Naive thymus-derived CD4-positive, alpha-beta T cell (primary cell): ENCODE measurements at regions of chr17 and their contacts with region 1.

Region 1: GRCh38 chr17:7014261-7014994 is 2.0 kb downstream of the RNASEK start:
- DNase-seq: peak; percentile 96 to 98 (median 97)
- ATAC-seq: peak; percentile 89
- H3K4me3 ChIP-seq: peak overlapping the region; percentile 97
- H3K4me3 Mint-ChIP-seq: peak overlapping the region; percentile 85 to 99 (median 97)
- H3K27ac ChIP-seq: peak overlapping the region; percentile 99
- H3K27ac Mint-ChIP-seq: peak overlapping the region; percentile 97 to 100 (median 100)
- H3K4me1 ChIP-seq: peaks cover 31 to 52% of the 10 kb centered on the region in 2 donors
- H3K4me1 Mint-ChIP-seq: peaks cover 30 to 81% (median 63%) of the 10 kb centered on the region in 7 donors
- H3K27me3 ChIP-seq: no peaks in the 10 kb centered on the region
- H3K27me3 Mint-ChIP-seq: no peaks in the 10 kb centered on the region

Region 2: GRCh38 chr17:5486204-5487124 is 1528.0 kb before region 1 on chr17 and contains the start of gene MIS12:
- CTCF ChIA-PET with region 1: no interaction called
- POLR2A ChIA-PET with region 1: no interaction called
- intact Hi-C with region 1: loop called in 1 of 2 experiments (anchors 1 kb)
- DNase-seq: peak; percentile 78 to 100 (median 97)
- ATAC-seq: peak; percentile 93
- H3K4me3 ChIP-seq: peak within 1 kb of the TSS; percentile 94
- H3K4me3 Mint-ChIP-seq: peak within 1 kb of the TSS; percentile 88 to 97 (median 94)
- H3K27ac ChIP-seq: peak within 1 kb of the TSS; percentile 98
- H3K27ac Mint-ChIP-seq: peak within 1 kb of the TSS; percentile 95 to 99 (median 98)
- H3K4me1 ChIP-seq: peaks cover 21 to 28% of the 10 kb centered on the region in 2 donors
- H3K4me1 Mint-ChIP-seq: peaks cover 22 to 77% (median 66%) of the 10 kb centered on the region in 7 donors
- H3K27me3 ChIP-seq: no peaks in the 10 kb centered on the region
- H3K27me3 Mint-ChIP-seq: no peaks in the 10 kb centered on the region
- total RNA-seq, gene MIS12: 16.3 to 53.6 (median 38.4) TPM

Region 3: GRCh38 chr17:6651357-6651918 is 363.0 kb before region 1 on chr17 and contains the starts of genes C17orf100 and MED31:
- CTCF ChIA-PET with region 1: no interaction called
- POLR2A ChIA-PET with region 1: no interaction called
- intact Hi-C with region 1: loop called in 1 of 2 experiments (anchors 1 kb)
- DNase-seq: peak; percentile 89 to 97 (median 93)
- ATAC-seq: peak; percentile 96
- H3K4me3 ChIP-seq: peak within 1 kb of the TSS; percentile 99
- H3K4me3 Mint-ChIP-seq: peak within 1 kb of the TSS; percentile 89 to 100 (median 96)
- H3K27ac ChIP-seq: peak within 1 kb of the TSS; percentile 95
- H3K27ac Mint-ChIP-seq: peak within 1 kb of the TSS; percentile 97 to 100 (median 99)
- H3K4me1 ChIP-seq: peaks cover 21 to 26% of the 10 kb centered on the region in 2 donors
- H3K4me1 Mint-ChIP-seq: peaks cover 37 to 87% (median 78%) of the 10 kb centered on the region in 7 donors
- H3K27me3 ChIP-seq: no peaks in the 10 kb centered on the region
- H3K27me3 Mint-ChIP-seq: peaks cover 0 to 29% (median 0%) of the 10 kb centered on the region in 5 donors
- total RNA-seq, gene C17orf100: 1.9 to 6.1 (median 1.9) TPM
- total RNA-seq, gene MED31: 21.4 to 41.2 (median 28.2) TPM

Region 4: DNA sequence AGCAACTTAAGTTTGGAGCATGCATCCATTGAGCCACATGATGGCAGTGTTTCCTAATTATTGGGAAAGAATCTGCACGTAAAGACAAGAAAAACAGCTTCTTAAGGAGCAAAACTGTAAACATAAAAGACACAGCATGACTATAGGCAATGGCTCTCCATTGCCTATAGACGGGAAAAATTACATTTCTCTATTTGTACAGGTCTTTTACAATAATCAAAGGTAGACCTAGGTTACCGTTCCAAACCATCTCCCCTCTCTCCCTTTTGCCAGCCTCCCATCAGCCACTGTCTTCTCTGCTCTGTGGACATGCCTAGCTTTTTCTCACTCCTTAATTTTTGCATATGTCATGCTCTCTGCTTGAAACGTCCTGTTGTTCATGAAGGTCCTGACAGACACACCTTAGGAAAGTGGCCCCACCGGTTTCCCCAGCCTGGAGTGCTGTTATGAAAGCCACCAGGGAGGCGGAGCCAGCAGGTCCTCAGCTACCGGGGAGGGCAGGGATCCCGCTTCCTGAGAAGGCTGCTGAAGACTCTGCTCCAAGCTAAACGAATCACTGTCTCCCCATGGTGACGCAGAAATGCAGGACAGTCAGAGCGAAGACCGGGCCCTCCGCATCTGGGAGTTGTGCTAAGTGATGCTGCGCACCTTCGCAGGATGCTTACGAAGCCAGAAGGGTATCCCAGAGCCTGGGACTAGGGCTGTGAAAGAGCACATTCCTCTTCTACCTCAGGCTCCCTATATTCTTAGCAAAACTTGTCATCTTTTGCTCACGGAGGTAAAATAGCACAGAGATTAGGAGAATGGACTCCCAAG is 31.7 kb after region 1 on chr17:
- CTCF ChIA-PET with region 1: interaction called, 3 read pairs
- POLR2A ChIA-PET with region 1: interaction called, 10 read pairs
- intact Hi-C with region 1: loop called in 1 of 2 experiments (anchors 5 kb)
- DNase-seq: peak in 8 of 9 donors; percentile 48 to 79 (median 69)
- ATAC-seq: peak; percentile 58
- H3K4me3 ChIP-seq: peak overlapping the region; percentile 66
- H3K4me3 Mint-ChIP-seq: peak overlapping the region; percentile 78 to 91 (median 86)
- H3K27ac ChIP-seq: peak overlapping the region; percentile 74
- H3K27ac Mint-ChIP-seq: peak overlapping the region; percentile 69 to 96 (median 92)
- H3K4me1 ChIP-seq: peaks cover 27 to 30% of the 10 kb centered on the region in 2 donors
- H3K4me1 Mint-ChIP-seq: peaks cover 0 to 53% (median 36%) of the 10 kb centered on the region in 7 donors
- H3K27me3 ChIP-seq: no peaks in the 10 kb centered on the region
- H3K27me3 Mint-ChIP-seq: peaks cover 0 to 36% (median 0%) of the 10 kb centered on the region in 5 donors

Region 5: DNA sequence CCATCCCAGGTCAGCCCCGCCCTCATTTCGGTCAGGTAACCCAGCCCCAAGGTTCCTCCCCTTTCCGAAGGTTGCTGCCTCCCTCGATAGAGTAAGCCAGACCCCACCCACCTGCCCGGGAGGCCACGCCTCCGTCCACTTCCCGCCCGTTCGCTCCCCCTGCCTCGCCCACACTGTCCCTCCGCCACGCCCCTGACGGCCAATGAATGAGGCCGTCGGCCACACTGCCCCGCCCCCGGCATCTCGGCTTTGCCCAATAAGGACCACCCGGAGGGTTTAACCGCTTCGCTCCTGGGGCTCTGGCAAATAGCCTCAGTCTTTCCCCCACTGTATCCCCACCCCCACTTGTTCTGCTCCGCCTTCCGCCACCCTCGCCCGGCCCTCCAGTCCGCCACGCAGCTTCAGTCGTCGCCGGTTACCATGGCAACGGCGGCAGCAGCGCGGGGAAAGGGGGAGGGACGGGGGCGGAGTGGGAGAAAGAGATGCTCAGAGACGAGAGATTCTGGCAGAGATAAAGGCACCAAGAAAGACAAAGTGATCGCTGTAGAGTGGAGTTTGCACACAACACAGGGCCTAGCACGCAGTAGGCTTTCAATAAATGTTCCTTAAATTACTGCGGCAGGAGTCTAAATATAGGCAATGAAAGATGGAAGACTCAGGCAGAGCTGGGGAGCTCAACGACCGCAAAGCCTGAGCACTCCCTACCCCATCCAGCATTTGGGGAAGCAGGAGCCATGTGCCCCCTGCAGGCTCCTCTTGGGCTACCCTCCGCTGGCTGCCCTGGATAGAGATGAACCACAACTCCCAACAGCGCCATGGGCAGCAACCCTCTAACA is 200.1 kb after region 1 on chr17:
- CTCF ChIA-PET with region 1: no interaction called
- POLR2A ChIA-PET with region 1: no interaction called
- intact Hi-C with region 1: loop called in 1 of 2 experiments (anchors 1 kb)
- DNase-seq: peak; percentile 96 to 99 (median 97)
- ATAC-seq: peak; percentile 90
- H3K4me3 ChIP-seq: peak overlapping the region; percentile 61
- H3K4me3 Mint-ChIP-seq: peak overlapping the region; percentile 76 to 97 (median 94)
- H3K27ac ChIP-seq: peak overlapping the region; percentile 97
- H3K27ac Mint-ChIP-seq: peak overlapping the region; percentile 90 to 100 (median 99)
- H3K4me1 ChIP-seq: peaks cover 25 to 49% of the 10 kb centered on the region in 2 donors
- H3K4me1 Mint-ChIP-seq: peaks cover 36 to 69% (median 65%) of the 10 kb centered on the region in 7 donors
- H3K27me3 ChIP-seq: no peaks in the 10 kb centered on the region
- H3K27me3 Mint-ChIP-seq: peaks cover 0 to 16% (median 0%) of the 10 kb centered on the region in 5 donors

Region 6: GRCh38 chr17:7834962-7835813 is 820.8 kb after region 1 on chr17:
- CTCF ChIA-PET with region 1: no interaction called
- POLR2A ChIA-PET with region 1: no interaction called
- intact Hi-C with region 1: loop called in 1 of 2 experiments (anchors 2 kb)
- DNase-seq: peak; percentile 76 to 97 (median 95)
- ATAC-seq: peak; percentile 70
- H3K4me3 ChIP-seq: peak overlapping the region; percentile 96
- H3K4me3 Mint-ChIP-seq: peak overlapping the region; percentile 91 to 99 (median 96)
- H3K27ac ChIP-seq: peak overlapping the region; percentile 96
- H3K27ac Mint-ChIP-seq: peak overlapping the region; percentile 95 to 100 (median 99)
- H3K4me1 ChIP-seq: peaks cover 29 to 38% of the 10 kb centered on the region in 2 donors
- H3K4me1 Mint-ChIP-seq: peaks cover 28 to 60% (median 44%) of the 10 kb centered on the region in 7 donors
- H3K27me3 ChIP-seq: no peaks in the 10 kb centered on the region
- H3K27me3 Mint-ChIP-seq: peaks cover 0 to 28% (median 0%) of the 10 kb centered on the region in 5 donors